ENCODE measurements at regions of chr17 and their contacts with region 1.

Region 1: GRCh38 chr17:72556944-72557826 is 436.4 kb downstream of the SOX9 start:
- DNase-seq: peak; percentile 80
- H3K4me3 Mint-ChIP-seq: no peak overlapping the region
- H3K27ac Mint-ChIP-seq: no peak overlapping the region
- H3K4me1 Mint-ChIP-seq: no peaks in the 10 kb centered on the region
- H3K27me3 Mint-ChIP-seq: peaks cover 3% of the 10 kb centered on the region

Region 2: DNA sequence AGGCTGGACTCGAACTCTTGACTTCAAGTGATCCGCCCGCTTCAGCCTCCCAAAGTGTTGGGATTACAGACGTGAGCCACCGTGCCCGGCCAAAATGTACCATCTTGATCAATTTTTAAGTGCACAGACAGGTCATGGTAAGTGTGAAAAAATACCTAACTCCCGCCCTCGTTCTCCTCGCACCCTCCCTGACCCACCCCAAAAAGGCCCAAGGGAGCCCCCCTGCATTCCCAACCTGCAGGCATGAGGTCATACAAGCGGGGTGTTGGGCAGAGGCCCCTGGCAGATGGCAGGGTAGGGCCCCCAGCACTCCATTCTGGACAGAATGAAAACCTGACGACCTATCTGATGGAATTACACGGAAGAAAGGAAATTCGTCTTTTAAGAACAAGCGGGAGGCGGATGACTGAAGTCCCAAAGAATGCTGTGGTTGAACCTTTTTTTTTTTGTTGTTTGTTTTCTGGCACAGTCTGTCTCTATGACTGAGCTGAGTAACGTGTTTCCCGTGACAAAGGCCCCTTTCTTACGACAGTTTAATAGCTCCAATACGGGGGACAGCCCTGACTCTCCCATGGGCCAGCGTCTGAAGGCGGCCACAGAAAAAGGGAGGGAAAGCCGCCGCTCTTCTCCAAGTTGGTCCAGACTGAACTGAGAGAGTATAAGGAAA is 158.9 kb after region 1 on chr17:
- CTCF ChIA-PET with region 1: interaction called, 12 read pairs
- intact Hi-C with region 1: no loop called
- DNase-seq: no peak
- H3K4me3 Mint-ChIP-seq: no peak overlapping the region
- H3K27ac Mint-ChIP-seq: no peak overlapping the region
- H3K4me1 Mint-ChIP-seq: peaks cover 20% of the 10 kb centered on the region
- H3K27me3 Mint-ChIP-seq: no peaks in the 10 kb centered on the region

Region 3: GRCh38 chr17:72985881-72986720 is 428.9 kb after region 1 on chr17:
- CTCF ChIA-PET with region 1: interaction called, 5 read pairs
- intact Hi-C with region 1: loop called (anchors 2 kb)
- DNase-seq: peak; percentile 70
- H3K4me3 Mint-ChIP-seq: no peak overlapping the region
- H3K27ac Mint-ChIP-seq: no peak overlapping the region
- H3K4me1 Mint-ChIP-seq: no peaks in the 10 kb centered on the region
- H3K27me3 Mint-ChIP-seq: no peaks in the 10 kb centered on the region

Region 4: DNA sequence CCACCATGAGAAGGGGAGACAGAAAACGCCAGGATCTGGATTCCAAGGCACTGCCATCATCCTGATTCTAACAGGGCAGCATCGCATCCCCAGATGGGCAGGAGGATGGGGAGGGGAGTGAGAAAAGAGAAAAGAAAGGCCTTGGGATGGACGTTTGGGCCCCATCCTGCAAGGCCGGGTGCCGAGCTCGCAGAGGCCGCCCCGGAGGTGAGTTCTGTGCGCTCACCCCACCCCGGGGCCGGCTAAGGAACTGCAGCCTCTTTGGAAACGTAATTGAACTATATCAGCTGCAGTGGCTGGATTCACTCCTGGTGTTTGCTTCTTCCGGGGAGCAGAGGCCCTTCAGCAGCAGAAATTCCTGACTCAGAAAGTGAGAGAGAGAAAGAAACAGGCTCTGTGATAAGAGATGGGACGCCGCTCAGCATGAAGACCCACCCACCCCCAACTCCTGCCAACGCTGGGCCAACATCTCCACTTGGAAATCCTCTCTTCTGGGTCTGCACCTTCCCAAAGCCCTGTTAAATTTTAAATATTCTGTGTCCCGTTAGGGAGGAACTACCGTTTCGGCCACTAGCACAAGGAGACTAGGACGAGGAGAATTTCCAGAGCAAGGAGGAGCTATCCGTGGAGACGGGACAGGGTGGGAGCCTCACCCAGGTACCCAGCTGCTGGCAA is 599.1 kb after region 1 on chr17:
- CTCF ChIA-PET with region 1: interaction called, 7 read pairs
- intact Hi-C with region 1: loop called (anchors 1 kb)
- DNase-seq: peak; percentile 68
- H3K4me3 Mint-ChIP-seq: no peak overlapping the region
- H3K27ac Mint-ChIP-seq: no peak overlapping the region
- H3K4me1 Mint-ChIP-seq: peaks cover 10% of the 10 kb centered on the region
- H3K27me3 Mint-ChIP-seq: peaks cover 11% of the 10 kb centered on the region

Region 5: GRCh38 chr17:73240561-73240960 is 683.4 kb after region 1 on chr17:
- CTCF ChIA-PET with region 1: no interaction called
- intact Hi-C with region 1: loop called (anchors 5 kb)
- DNase-seq: no peak
- H3K4me3 Mint-ChIP-seq: no peak overlapping the region
- H3K27ac Mint-ChIP-seq: no peak overlapping the region
- H3K4me1 Mint-ChIP-seq: peaks cover 34% of the 10 kb centered on the region
- H3K27me3 Mint-ChIP-seq: no peaks in the 10 kb centered on the region

Region 6: DNA sequence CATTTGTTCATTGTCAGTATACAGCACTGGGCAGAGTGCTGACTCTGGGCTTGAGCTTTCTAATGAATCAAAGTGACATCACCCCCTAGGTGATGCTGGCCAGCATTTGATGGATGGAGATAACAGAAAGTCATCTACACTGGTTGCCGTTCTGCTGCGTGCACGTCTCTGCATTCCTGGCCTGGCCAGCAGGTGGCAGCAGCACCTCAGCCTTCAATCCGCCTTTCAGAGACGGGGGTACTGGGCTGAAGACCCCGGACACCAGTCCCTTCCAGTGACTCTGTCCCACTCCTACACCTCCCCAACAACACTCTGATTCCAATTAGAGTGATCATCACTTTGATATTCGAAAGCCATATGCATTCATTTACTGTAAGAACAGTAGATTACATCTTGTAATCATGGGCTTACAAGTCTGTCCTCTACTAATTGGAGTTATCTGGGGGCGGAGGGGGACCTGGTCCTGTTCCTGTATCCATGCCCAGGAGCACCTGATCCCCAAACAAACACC is 698.5 kb after region 1 on chr17:
- CTCF ChIA-PET with region 1: interaction called, 6 read pairs
- intact Hi-C with region 1: loop called (anchors 2 kb)
- DNase-seq: peak; percentile 68
- H3K4me3 Mint-ChIP-seq: no peak overlapping the region
- H3K27ac Mint-ChIP-seq: no peak overlapping the region
- H3K4me1 Mint-ChIP-seq: no peaks in the 10 kb centered on the region
- H3K27me3 Mint-ChIP-seq: peaks cover 2% of the 10 kb centered on the region

Region 7: DNA sequence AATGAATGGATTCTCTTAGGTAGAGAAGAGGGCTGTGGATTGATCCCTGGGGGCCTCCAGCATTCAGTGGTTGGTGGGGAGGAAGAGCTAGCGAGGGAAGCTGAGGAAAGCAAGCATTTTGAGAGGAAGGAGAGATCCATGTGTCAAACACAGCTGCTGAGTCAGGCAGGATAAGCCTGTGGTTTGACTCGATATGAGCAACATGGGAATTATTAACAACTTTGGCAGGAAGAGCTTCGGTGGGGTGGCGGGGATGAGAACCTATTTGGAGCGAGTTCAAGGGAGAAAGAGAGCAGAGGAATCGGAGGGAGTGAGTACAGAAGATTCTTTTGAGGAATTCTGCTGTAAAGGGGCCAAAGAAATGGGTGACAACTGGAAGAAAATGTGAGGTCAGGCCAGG is 814.1 kb after region 1 on chr17:
- CTCF ChIA-PET with region 1: interaction called, 9 read pairs
- intact Hi-C with region 1: loop called (anchors 1 kb)
- DNase-seq: no peak
- H3K4me3 Mint-ChIP-seq: no peak overlapping the region
- H3K27ac Mint-ChIP-seq: no peak overlapping the region
- H3K4me1 Mint-ChIP-seq: no peaks in the 10 kb centered on the region
- H3K27me3 Mint-ChIP-seq: peaks cover 4% of the 10 kb centered on the region

Measured in activated naive CD4-positive, alpha-beta T cell treated with anti-CD3 and anti-CD28 coated beads for 36 hours (primary cell).